CD8-positive, alpha-beta T cell (primary cell): ENCODE measurements at regions of chr9 and their contacts with region 1.

Region 1: DNA sequence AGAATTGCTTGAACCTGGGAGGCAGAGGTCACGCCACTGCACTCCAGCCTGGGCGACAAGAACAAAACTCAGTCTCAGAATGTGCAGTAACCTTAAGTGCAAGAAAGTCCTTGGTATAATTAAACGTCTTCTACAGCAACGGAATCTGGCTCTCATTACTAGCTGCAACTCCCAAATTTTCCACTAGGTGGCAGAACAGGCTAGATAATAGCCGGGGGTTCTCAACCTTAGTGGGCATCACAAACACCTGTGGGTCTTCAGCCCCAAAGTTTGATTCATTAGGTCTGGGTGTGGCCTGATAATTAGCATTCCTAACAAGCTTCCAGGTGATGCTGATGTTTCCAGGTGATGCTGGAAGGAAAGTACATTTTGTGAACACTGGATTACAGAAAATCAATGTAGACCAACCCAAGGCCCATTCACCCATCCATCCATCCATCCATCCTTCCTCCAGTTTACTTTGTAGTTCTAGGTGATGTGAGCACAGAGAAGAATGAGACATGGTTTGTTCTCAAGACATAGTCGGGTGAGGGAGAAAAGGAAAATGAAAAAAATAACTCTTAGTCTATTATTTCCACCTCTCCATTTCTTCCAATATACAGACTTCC is 37.3 kb downstream of the FBXW2 start:
- DNase-seq: peak; percentile 46 to 82 (median 70)
- ATAC-seq: peak; percentile 79
- H3K4me3 ChIP-seq: no peak overlapping the region
- H3K4me3 Mint-ChIP-seq: no peak overlapping the region
- H3K27ac ChIP-seq: no peak overlapping the region
- H3K27ac Mint-ChIP-seq: no peak overlapping the region
- H3K4me1 ChIP-seq: no peaks in the 10 kb centered on the region
- H3K4me1 Mint-ChIP-seq: no peaks in the 10 kb centered on the region
- H3K27me3 ChIP-seq: no peaks in the 10 kb centered on the region
- H3K27me3 Mint-ChIP-seq: no peaks in the 10 kb centered on the region
- CTCF ChIP-seq: peak; percentile 93

Region 2: GRCh38 chr9:120723547-120723946 is 32.4 kb before region 1 on chr9:
- CTCF ChIA-PET with region 1: no interaction called
- POLR2A ChIA-PET with region 1: no interaction called
- intact Hi-C with region 1: no loop called
- DNase-seq: no peak
- ATAC-seq: no peak
- H3K4me3 ChIP-seq: no peak overlapping the region
- H3K4me3 Mint-ChIP-seq: no peak overlapping the region
- H3K27ac ChIP-seq: no peak overlapping the region
- H3K27ac Mint-ChIP-seq: no peak overlapping the region
- H3K4me1 ChIP-seq: no peaks in the 10 kb centered on the region
- H3K4me1 Mint-ChIP-seq: no peaks in the 10 kb centered on the region
- H3K27me3 ChIP-seq: peaks cover 0 to 3% of the 10 kb centered on the region in 2 experiments
- H3K27me3 Mint-ChIP-seq: no peaks in the 10 kb centered on the region
- CTCF ChIP-seq: no peak

Region 3: DNA sequence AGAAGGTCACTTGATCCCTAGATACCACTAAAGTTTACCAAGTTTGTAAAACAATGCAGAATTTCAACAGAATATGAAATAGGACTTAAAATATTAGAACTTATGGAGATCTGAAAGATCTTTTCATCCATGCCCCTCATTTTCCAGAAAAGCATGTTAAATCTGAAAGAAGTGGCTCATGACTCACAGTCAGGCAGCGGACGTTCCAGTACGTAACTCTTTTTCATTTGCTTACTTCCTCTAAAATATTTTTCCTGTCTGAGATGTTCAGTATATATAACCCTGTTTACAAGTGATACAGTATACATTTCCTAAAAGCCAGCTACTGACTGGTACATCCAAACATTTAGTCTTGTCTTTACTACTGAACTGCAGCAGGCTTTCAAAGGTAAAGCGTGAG is 15.0 kb after region 1 on chr9:
- CTCF ChIA-PET with region 1: interaction called, 13 read pairs
- POLR2A ChIA-PET with region 1: no interaction called
- intact Hi-C with region 1: no loop called
- DNase-seq: no peak
- ATAC-seq: no peak
- H3K4me3 ChIP-seq: no peak overlapping the region
- H3K4me3 Mint-ChIP-seq: no peak overlapping the region
- H3K27ac ChIP-seq: no peak overlapping the region
- H3K27ac Mint-ChIP-seq: no peak overlapping the region
- H3K4me1 ChIP-seq: no peaks in the 10 kb centered on the region
- H3K4me1 Mint-ChIP-seq: peaks cover 3% of the 10 kb centered on the region
- H3K27me3 ChIP-seq: no peaks in the 10 kb centered on the region
- H3K27me3 Mint-ChIP-seq: no peaks in the 10 kb centered on the region
- CTCF ChIP-seq: no peak

Region 4: GRCh38 chr9:120985810-120986222 is 229.9 kb after region 1 on chr9:
- CTCF ChIA-PET with region 1: interaction called, 9 read pairs
- POLR2A ChIA-PET with region 1: no interaction called
- intact Hi-C with region 1: loop called in 1 of 2 experiments (anchors 5 kb)
- DNase-seq: peak in 1 of 9 experiments; percentile 12
- ATAC-seq: no peak
- H3K4me3 ChIP-seq: no peak overlapping the region
- H3K4me3 Mint-ChIP-seq: no peak overlapping the region
- H3K27ac ChIP-seq: no peak overlapping the region
- H3K27ac Mint-ChIP-seq: no peak overlapping the region
- H3K4me1 ChIP-seq: no peaks in the 10 kb centered on the region
- H3K4me1 Mint-ChIP-seq: peaks cover 5% of the 10 kb centered on the region
- H3K27me3 ChIP-seq: no peaks in the 10 kb centered on the region
- H3K27me3 Mint-ChIP-seq: no peaks in the 10 kb centered on the region
- CTCF ChIP-seq: no peak

Region 5: DNA sequence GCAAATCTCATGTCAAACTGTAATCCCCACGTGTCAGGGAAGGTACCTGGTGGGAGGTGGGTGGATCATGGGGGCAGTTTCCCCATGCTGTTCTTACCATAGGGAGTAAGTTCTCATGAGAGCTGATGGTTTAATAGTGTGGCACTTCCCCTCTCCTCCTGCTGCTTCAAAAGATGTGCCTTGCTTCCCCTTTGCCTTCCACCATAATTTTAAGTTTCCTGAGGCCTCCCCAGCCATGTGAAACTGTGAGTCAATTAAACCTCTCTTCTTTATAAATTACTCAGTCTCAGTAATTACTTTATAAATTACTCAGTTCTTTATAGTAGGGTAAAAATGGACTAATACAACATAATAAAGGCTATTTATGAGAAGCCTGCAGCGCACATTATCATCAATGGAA is 311.7 kb after region 1 on chr9:
- CTCF ChIA-PET with region 1: interaction called, 176 read pairs
- POLR2A ChIA-PET with region 1: interaction called, 3 read pairs
- intact Hi-C with region 1: loop called in 1 of 2 experiments (anchors 1 kb)
- DNase-seq: no peak
- ATAC-seq: no peak
- H3K4me3 ChIP-seq: no peak overlapping the region
- H3K4me3 Mint-ChIP-seq: no peak overlapping the region
- H3K27ac ChIP-seq: no peak overlapping the region
- H3K27ac Mint-ChIP-seq: no peak overlapping the region
- H3K4me1 ChIP-seq: no peaks in the 10 kb centered on the region
- H3K4me1 Mint-ChIP-seq: peaks cover 13% of the 10 kb centered on the region
- H3K27me3 ChIP-seq: no peaks in the 10 kb centered on the region
- H3K27me3 Mint-ChIP-seq: no peaks in the 10 kb centered on the region
- CTCF ChIP-seq: no peak

Region 6: DNA sequence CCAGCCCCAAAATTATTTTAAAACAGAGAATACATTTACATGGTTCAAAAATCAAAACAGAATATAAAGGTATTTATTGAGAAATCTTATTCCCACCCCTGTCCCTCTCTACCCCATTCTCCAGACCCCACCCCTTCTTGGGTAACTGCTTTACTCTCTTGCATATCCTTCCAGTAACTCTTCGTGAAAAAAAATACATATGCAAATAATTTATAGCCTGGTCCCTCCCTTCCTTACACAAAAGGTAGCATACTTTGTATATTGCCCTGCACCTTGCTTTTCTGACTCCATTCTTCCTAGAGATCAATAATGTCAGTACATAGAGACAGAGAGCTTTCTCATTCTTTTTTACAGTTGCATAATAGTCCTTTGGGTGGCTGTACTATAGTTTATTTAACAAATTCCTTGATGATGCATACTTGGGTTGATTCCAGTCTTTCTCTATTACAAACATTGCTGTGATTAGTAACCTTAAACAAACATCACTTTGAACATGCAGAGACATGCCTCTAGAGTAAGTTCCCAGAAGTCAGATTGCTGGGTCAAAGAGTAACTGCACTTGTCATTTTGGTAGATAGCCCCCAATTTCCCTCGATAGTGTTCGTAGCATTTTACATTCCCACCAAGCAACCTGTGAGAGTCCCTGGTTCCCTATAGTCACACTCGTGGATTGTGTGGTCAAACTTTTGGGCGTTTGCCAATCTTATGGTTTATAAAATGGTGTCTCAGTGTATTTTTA is 566.3 kb after region 1 on chr9:
- CTCF ChIA-PET with region 1: interaction called, 9 read pairs
- POLR2A ChIA-PET with region 1: no interaction called
- intact Hi-C with region 1: loop called in 1 of 2 experiments (anchors 2 kb)
- DNase-seq: peak in 2 of 9 experiments; percentile 13 to 18
- ATAC-seq: no peak
- H3K4me3 ChIP-seq: no peak overlapping the region
- H3K4me3 Mint-ChIP-seq: no peak overlapping the region
- H3K27ac ChIP-seq: no peak overlapping the region
- H3K27ac Mint-ChIP-seq: no peak overlapping the region
- H3K4me1 ChIP-seq: peaks cover 7% of the 10 kb centered on the region
- H3K4me1 Mint-ChIP-seq: peaks cover 21% of the 10 kb centered on the region
- H3K27me3 ChIP-seq: no peaks in the 10 kb centered on the region
- H3K27me3 Mint-ChIP-seq: no peaks in the 10 kb centered on the region
- CTCF ChIP-seq: no peak